Activated B cell treated with CpG ODN at 0.5 μM for 24 hours (primary cell): ENCODE measurements at regions of chr3 and their contacts with region 1.

Region 1: DNA sequence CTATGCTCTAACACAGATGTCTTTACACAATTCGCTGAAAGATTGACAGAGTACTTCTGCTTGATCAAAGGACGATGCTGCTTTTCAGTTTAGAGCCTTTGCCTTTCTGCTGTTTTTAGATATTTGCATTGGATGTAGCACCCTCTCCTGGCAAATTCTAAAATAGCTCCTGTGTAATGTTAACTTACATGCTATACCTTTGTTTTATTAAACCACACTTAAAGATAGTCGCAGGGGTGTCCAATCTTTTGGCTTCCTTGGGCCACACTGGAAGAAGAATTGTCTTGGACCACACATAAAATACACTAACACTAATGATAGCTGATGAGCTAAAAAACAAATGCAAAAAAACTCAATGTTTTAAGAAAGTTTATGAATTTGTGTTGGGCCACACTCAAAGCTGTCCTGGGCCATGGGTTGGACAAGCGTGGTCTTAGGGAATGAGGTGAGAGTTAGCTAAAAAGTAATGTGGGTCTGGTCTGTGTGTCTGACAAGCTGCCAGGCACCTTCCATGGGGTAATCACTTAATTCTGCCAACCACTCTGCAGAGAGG is 62.9 kb downstream of the ATG7 start:
- DNase-seq: no peak
- ATAC-seq: peak; percentile 77
- H3K4me3 Mint-ChIP-seq: no peak overlapping the region
- H3K27ac Mint-ChIP-seq: no peak overlapping the region
- H3K4me1 Mint-ChIP-seq: peaks cover 2% of the 10 kb centered on the region
- H3K27me3 Mint-ChIP-seq: no peaks in the 10 kb centered on the region
- CTCF ChIP-seq: no peak

Region 2: DNA sequence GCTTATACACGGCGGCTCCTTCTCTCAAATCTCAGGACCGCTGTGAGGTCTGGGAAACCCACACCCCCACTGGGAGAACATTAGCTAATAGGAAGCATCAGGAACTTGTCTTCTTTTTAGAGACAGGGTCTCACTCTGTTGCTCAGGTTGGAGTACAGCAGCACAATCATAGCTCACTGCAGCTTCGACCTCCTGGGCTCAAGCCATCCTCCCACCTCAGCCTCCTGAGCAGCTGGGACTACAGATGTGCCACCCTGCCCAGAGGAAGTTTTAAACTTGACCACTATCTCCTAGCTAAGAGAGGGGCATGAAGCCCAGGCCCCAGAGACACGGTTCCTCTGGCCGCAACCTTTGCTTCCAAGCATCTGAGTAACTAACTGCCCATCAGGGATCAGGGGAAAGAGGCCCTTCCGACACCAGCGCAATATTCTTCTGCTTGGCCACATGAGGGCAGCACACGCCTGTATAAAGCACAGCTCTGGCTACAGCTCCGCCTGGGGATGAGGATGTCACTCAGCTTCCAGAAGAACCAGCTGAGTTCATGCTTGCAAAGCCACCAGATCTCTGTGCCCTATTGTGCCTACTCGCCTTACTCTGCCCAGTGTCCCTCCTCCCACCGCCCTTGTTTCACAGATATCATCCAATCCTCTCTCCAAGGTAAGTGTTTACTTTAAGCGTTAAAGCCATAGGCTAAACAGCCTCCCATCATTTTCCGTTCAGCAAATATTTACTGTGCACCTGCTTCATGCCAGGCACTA is 576.6 kb before region 1 on chr3:
- CTCF ChIA-PET with region 1: no interaction called
- POLR2A ChIA-PET with region 1: no interaction called
- intact Hi-C with region 1: loop called (anchors 10 kb)
- DNase-seq: no peak
- ATAC-seq: peak; percentile 73
- H3K4me3 Mint-ChIP-seq: no peak overlapping the region
- H3K27ac Mint-ChIP-seq: no peak overlapping the region
- H3K4me1 Mint-ChIP-seq: no peaks in the 10 kb centered on the region
- H3K27me3 Mint-ChIP-seq: peaks cover 39% of the 10 kb centered on the region
- CTCF ChIP-seq: no peak

Region 3: DNA sequence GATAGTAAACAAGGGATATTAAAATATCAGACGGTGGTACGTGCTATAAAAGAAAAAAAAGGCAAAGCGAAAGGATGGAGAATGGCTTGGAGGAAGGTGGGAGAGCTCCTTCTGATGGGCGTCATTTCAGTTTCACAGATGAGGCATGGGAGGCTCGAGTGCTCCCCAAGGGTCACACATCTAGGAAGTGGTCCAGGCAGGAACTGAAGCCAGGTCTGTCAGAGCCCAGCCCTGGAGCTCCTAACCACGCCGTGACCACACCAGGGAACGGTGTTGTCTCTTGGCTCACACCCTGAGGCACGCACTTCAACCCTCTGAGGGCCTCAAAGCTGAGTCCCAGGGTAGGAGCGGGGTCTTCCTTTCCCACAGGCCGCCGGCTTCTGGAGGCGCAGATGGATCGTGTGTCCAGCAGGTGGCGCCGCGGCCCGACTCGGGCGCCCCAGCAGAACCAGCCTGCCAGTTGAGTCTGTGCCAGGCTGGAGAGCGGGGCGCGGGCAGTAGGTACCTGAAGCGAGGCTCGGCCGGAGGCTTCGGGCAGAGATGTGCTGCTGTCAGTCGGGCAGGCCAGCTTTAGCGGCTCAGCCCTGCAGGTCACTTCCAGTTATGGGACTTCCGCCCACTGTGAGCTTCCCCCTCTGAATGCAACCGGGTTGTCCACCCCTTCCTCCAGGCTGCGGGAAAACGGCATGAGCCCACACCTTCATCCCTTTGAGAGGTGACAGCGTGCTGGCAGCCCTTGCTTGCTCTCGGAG is 274.5 kb before region 1 on chr3:
- CTCF ChIA-PET with region 1: interaction called, 41 read pairs
- POLR2A ChIA-PET with region 1: no interaction called
- intact Hi-C with region 1: loop called (anchors 1 kb)
- DNase-seq: peak; percentile 46
- ATAC-seq: peak; percentile 61
- H3K4me3 Mint-ChIP-seq: no peak overlapping the region
- H3K27ac Mint-ChIP-seq: no peak overlapping the region
- H3K4me1 Mint-ChIP-seq: no peaks in the 10 kb centered on the region
- H3K27me3 Mint-ChIP-seq: peaks cover 20% of the 10 kb centered on the region
- CTCF ChIP-seq: peak; percentile 57

Region 4: GRCh38 chr3:11236595-11237461 is 98.3 kb before region 1 on chr3:
- CTCF ChIA-PET with region 1: interaction called, 125 read pairs
- POLR2A ChIA-PET with region 1: interaction called, 4 read pairs
- intact Hi-C with region 1: loop called (anchors 1 kb)
- DNase-seq: peak; percentile 62
- ATAC-seq: peak; percentile 76
- H3K4me3 Mint-ChIP-seq: no peak overlapping the region
- H3K27ac Mint-ChIP-seq: no peak overlapping the region
- H3K4me1 Mint-ChIP-seq: no peaks in the 10 kb centered on the region
- H3K27me3 Mint-ChIP-seq: peaks cover 21% of the 10 kb centered on the region
- CTCF ChIP-seq: peak; percentile 78

Region 5: DNA sequence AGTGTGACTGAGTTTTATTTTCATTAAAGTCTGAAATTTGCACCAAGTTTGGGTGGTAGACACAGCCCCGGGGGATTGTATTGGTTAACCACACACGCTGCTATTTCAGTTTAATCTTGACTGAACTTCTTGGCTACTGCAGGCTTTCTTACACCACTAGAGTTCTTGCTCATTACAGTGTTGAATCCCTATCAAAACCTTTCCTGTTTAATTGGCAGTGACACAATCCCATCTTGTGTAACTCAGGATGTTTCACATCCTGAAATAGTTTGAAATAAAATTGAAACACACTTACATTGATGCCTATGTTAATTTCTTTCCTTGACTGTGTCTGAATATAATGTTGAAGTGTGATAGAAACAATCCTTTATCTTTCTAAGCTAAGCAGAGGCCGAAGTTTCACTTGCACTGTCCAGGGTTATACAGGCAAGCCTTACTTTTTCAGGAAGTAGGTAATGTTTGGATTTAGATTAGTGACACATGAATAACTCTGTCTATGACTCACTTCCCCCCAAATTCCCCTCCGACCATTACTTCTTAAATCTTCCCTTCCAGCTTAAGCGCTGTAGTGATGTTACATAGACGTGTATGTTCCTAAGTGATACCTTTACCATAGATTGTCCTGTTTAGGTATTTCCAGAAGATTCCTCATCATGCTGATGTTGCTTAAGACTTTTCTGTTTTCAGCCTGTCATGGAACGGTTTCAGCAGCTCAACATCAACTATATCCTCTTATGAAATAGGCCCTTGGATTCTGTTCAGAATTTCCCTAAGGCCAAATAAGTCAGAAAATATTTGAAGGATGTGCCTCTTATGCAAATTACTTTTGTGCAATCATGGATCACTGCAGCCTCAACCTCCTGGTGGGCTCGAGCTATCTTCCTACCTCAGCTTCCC is 46.1 kb before region 1 on chr3:
- CTCF ChIA-PET with region 1: interaction called, 11 read pairs
- POLR2A ChIA-PET with region 1: interaction called, 3 read pairs
- intact Hi-C with region 1: loop called (anchors 2 kb)
- DNase-seq: no peak
- ATAC-seq: peak; percentile 82
- H3K4me3 Mint-ChIP-seq: peak overlapping the region; percentile 81
- H3K27ac Mint-ChIP-seq: peak overlapping the region; percentile 99
- H3K4me1 Mint-ChIP-seq: peaks cover 57% of the 10 kb centered on the region
- H3K27me3 Mint-ChIP-seq: no peaks in the 10 kb centered on the region
- CTCF ChIP-seq: no peak

Region 6: GRCh38 chr3:11509173-11510000 is 174.3 kb after region 1 on chr3:
- CTCF ChIA-PET with region 1: no interaction called
- POLR2A ChIA-PET with region 1: no interaction called
- intact Hi-C with region 1: no loop called
- DNase-seq: no peak
- ATAC-seq: no peak
- H3K4me3 Mint-ChIP-seq: no peak overlapping the region
- H3K27ac Mint-ChIP-seq: no peak overlapping the region
- H3K4me1 Mint-ChIP-seq: no peaks in the 10 kb centered on the region
- H3K27me3 Mint-ChIP-seq: no peaks in the 10 kb centered on the region
- CTCF ChIP-seq: no peak

Region 7: GRCh38 chr3:11651900-11652299 is 316.8 kb after region 1 on chr3:
- CTCF ChIA-PET with region 1: interaction called, 4 read pairs
- POLR2A ChIA-PET with region 1: no interaction called
- intact Hi-C with region 1: loop called (anchors 2 kb)
- DNase-seq: no peak
- ATAC-seq: peak; percentile 25
- H3K4me3 Mint-ChIP-seq: no peak overlapping the region
- H3K27ac Mint-ChIP-seq: no peak overlapping the region
- H3K4me1 Mint-ChIP-seq: peaks cover 15% of the 10 kb centered on the region
- H3K27me3 Mint-ChIP-seq: no peaks in the 10 kb centered on the region
- CTCF ChIP-seq: no peak